Activated CD8-positive, alpha-beta T cell treated with anti-CD3 and anti-CD28 coated beads for 36 hours (primary cell): ENCODE measurements at regions of chr22 and their contacts with region 1.

Region 1: GRCh38 chr22:39003165-39003638 is 10.9 kb upstream of the APOBEC3C start:
- DNase-seq: peak; percentile 90
- ATAC-seq: peak; percentile 95
- H3K4me3 Mint-ChIP-seq: no peak overlapping the region
- H3K27ac Mint-ChIP-seq: no peak overlapping the region
- H3K4me1 Mint-ChIP-seq: peaks cover 5% of the 10 kb centered on the region
- H3K27me3 Mint-ChIP-seq: peaks cover 1% of the 10 kb centered on the region
- CTCF ChIP-seq: peak; percentile 71

Region 2: DNA sequence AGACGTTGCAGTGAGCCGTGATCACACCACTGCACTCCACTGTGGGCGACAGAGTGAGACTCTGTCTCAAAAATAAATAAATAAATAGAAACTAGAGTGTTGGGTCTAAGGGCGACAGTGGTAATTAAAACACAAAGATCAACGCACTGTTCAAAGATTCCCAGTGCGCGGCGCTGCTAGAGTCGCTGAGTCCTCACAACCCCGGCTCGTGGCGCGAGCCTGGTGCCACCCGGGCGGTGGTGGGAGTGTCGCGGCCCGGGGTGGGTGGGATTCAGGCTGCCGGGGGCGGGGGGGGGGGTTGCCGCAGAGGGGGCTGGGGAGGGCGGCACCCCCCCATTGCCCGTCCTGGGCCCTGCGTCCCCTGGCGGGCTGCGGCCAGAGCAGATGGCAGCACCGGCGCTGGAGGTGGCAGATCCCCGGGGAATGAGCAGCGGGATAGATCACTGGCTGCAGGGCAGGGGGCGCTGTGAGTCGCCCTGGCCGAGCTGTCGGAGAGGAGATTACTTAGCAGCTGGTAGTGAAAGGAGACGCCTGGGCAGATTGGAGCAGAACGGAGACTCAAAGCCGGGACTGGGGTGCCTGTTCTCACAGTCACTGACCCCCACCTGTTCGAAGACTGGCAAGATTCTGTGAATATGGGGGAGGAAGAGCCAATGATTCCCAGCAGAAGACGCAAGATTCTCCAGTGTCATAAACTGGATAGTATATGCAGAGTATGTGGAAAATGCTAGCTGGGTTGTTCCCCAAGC is 76.0 kb before region 1 on chr22:
- CTCF ChIA-PET with region 1: interaction called, 10 read pairs
- POLR2A ChIA-PET with region 1: no interaction called
- intact Hi-C with region 1: no loop called
- DNase-seq: peak; percentile 57
- ATAC-seq: peak; percentile 66
- H3K4me3 Mint-ChIP-seq: no peak overlapping the region
- H3K27ac Mint-ChIP-seq: no peak overlapping the region
- H3K4me1 Mint-ChIP-seq: peaks cover 3% of the 10 kb centered on the region
- H3K27me3 Mint-ChIP-seq: peaks cover 34% of the 10 kb centered on the region
- CTCF ChIP-seq: peak; percentile 61

Region 3: GRCh38 chr22:38973289-38974169 is 29.7 kb before region 1 on chr22:
- CTCF ChIA-PET with region 1: interaction called, 16 read pairs
- POLR2A ChIA-PET with region 1: interaction called, 3 read pairs
- intact Hi-C with region 1: no loop called
- DNase-seq: peak; percentile 77
- ATAC-seq: peak; percentile 97
- H3K4me3 Mint-ChIP-seq: no peak overlapping the region
- H3K27ac Mint-ChIP-seq: no peak overlapping the region
- H3K4me1 Mint-ChIP-seq: peaks cover 3% of the 10 kb centered on the region
- H3K27me3 Mint-ChIP-seq: peaks cover 17% of the 10 kb centered on the region
- CTCF ChIP-seq: peak; percentile 93

Region 4: DNA sequence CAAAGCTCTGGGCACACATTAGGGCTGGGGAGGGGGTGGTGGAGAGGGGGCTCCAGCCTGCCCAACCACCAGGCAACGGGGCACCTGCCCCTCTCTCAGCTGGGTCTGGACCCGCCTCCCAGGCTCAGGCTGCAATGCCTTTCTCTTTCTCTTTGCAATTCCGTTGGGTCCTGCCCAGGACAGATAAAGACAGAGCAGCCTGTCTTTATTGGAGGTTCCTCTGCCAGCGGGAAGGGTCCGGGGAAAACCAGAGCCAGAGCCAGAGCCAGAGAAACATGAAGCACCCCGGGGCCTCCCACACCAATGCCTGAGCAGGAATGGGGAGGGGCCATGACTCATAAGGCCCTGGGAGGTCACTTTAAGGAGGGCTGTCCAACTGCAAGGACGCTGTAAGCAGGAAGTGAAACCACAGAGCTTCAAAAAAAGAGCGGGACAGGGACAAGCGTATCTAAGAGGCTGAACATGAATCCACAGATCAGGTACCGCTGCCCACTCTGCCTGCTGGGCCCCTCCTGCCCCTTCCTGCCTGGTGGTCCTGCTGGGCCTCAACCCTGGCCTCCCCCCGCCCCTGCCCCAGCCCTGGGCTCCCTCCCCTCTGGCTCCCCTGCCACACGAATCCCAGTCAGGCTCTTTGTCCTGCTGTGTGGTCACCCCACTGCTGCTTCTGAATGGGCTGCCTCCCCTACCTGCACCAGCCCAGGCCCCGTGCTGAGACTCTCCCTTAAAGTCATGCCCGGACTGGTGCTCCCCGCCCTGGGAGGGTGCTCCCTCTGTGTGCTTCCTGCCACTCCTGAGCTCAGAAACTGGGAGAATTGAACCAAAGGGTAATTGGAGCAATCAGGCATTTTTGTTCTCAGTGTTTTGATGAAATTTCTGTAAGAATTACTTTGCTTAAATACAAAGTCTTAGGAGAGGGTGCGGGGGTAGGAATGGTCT is 20.9 kb before region 1 on chr22 and contains the start of gene APOBEC3B:
- CTCF ChIA-PET with region 1: interaction called, 18 read pairs
- POLR2A ChIA-PET with region 1: interaction called, 3 read pairs
- intact Hi-C with region 1: no loop called
- DNase-seq: peak; percentile 85
- ATAC-seq: peak; percentile 74
- H3K4me3 Mint-ChIP-seq: peak within 1 kb of the TSS; percentile 38
- H3K27ac Mint-ChIP-seq: peak within 1 kb of the TSS; percentile 63
- H3K4me1 Mint-ChIP-seq: peaks cover 51% of the 10 kb centered on the region
- H3K27me3 Mint-ChIP-seq: no peaks in the 10 kb centered on the region
- CTCF ChIP-seq: no peak
- total RNA-seq, gene APOBEC3B: 5.0 to 5.1 TPM

Region 5: DNA sequence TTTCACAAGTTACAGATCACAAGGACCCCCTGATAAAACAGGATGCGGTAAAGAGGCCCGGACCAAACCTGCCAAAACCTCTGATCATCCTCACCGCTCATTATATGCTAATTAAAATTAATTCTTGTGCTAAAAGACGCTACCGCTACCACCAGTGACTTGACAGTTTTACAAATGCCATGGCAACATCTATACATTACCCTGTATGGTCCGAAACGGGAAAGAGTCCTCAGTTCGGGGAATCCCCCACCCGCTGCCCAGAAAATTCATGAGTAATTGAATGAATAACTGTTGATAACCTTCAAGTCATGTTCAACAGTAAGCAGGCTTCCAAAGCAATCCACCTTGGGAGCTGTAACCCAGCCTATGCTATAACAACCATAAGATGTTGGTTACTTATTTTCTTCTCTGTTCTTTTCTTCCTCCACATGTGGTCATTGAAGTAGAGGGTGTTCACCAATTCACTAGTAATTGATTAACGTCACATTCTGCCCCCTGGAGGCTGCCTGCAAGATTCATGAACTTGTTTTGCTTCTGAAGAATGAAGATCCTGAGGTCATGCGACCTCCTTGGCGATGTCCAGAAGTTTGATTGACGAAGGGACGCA is 114.5 kb after region 1 on chr22:
- CTCF ChIA-PET with region 1: interaction called, 10 read pairs
- POLR2A ChIA-PET with region 1: interaction called, 3 read pairs
- intact Hi-C with region 1: loop called (anchors 5 kb)
- DNase-seq: peak; percentile 91
- ATAC-seq: peak; percentile 70
- H3K4me3 Mint-ChIP-seq: peak overlapping the region; percentile 48
- H3K27ac Mint-ChIP-seq: peak overlapping the region; percentile 93
- H3K4me1 Mint-ChIP-seq: peaks cover 59% of the 10 kb centered on the region
- H3K27me3 Mint-ChIP-seq: no peaks in the 10 kb centered on the region
- CTCF ChIP-seq: peak; percentile 66

Region 6: GRCh38 chr22:39195436-39195835 is 192.2 kb after region 1 on chr22:
- CTCF ChIA-PET with region 1: no interaction called
- POLR2A ChIA-PET with region 1: no interaction called
- intact Hi-C with region 1: no loop called
- DNase-seq: no peak
- ATAC-seq: no peak
- H3K4me3 Mint-ChIP-seq: no peak overlapping the region
- H3K27ac Mint-ChIP-seq: no peak overlapping the region
- H3K4me1 Mint-ChIP-seq: no peaks in the 10 kb centered on the region
- H3K27me3 Mint-ChIP-seq: no peaks in the 10 kb centered on the region
- CTCF ChIP-seq: no peak